ENCODE measurements at regions of chr4 and their contacts with region 1.

Region 1: DNA sequence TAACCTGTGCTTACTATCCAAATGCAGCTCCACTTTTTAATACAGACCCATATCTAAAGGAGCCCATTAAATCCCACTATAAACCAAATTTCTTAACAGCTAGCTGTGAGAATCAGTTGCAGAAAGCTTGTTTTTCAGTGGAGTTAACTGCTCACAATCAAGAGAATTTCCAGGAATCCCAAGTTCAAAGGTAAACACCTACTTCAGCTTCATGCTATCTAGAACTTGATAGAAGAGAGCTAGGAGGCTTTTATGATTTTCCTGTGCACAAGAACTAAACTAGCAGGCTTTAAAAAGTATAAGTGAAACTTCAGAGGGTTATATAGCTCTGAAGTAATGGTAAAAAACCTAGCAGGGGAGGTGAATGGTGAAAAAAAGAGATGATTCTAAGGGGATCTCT is 96.2 kb upstream of the PABPC4L start:
- DNase-seq: no peak
- ATAC-seq: no peak

Region 2: DNA sequence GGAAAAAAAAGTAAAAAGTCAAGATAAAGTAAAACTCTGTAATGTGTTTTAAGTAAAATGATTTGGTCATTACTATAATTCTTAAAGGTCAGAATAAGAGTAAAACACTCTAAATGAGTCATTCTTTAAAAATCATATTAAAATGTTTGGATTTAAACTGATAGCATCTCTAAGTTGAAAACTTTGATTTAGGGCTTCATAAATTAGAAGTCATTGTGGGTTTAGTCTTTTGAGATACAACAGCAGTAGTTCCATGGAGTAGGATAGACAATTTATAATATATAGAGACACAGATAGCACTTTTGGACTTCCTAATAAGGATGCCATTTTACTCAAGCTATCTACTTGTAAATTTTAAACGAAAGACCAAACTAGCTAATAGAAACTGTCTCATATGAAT is 19.1 kb before region 1 on chr4:
- intact Hi-C with region 1: loop called (anchors 1 kb)
- DNase-seq: no peak
- ATAC-seq: no peak

Region 3: DNA sequence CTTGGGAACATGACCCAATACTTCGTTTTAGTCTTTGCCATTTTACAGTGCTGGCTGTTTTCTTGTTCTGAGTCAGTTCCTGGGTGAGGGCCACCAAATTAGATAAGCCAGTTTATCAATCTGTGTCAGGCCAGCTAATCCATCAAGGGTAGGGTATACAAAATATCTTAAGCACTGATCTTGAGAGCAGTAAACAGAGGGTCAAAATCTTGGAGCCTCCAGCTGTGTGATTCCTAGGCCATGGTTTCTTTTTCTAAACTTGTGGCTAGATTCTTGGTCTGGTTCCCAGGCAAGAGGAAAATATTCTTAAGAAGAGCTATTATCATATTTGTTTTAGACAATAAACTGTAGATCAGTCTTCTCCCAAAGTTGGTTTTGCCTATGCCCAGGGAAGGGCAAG is 1300.4 kb after region 1 on chr4:
- intact Hi-C with region 1: no loop called
- DNase-seq: no peak
- ATAC-seq: no peak

Measured in sciatic nerve (tissue), 2 donors.